Activated naive CD4-positive, alpha-beta T cell treated with anti-CD3 and anti-CD28 coated beads for 36 hours (primary cell): ENCODE measurements at regions of chr9 and their contacts with region 1.

Region 1: DNA sequence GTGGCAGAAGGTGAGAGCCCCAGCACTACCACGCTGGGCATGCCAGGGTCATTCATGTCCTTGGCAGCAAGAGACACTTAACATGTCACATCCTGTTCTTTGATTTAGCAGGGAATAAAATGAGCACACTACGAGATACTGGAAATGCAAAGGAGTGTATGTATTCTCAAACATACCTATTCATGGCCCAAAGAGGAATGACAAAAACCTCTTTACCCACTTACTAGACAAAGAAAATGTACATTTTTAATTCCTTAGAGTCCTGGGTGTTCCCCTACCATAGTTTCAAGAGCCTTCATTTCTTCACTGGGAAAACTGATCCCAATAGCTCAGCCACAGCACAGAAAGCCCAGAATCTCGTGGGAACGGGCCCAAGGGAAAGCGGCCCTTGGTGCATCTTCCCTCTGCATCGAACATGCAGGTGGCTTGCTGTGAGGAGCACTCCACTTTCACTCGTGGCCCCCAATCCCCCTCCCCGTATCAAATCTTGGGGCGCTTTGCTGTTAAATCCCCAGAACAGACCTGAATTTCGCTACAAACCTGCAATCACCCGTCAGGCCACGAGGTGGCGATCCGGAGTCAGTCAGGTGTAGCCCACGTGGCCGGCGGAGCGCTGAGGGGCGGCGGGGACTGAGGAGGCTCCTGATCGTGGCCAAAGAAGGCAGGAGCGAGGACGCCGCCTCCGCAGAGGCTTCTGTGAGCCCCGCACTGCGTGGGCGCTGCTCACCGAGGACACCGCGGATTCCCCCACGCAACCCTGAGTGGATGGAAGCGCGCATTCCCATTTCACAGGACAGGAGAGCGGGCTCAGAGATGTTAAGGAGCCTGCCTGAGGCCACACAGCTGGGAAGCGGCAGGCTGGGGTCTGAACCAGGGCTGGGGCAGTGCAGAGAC is 91.4 kb downstream of the LMX1B start:
- DNase-seq: peak; percentile 91
- H3K4me3 Mint-ChIP-seq: peak overlapping the region; percentile 58
- H3K27ac Mint-ChIP-seq: no peak overlapping the region
- H3K4me1 Mint-ChIP-seq: peaks cover 14% of the 10 kb centered on the region
- H3K27me3 Mint-ChIP-seq: peaks cover 17% of the 10 kb centered on the region

Region 2: GRCh38 chr9:126690431-126691350 is 14.4 kb before region 1 on chr9:
- CTCF ChIA-PET with region 1: interaction called, 12 read pairs
- intact Hi-C with region 1: no loop called
- DNase-seq: peak; percentile 63
- H3K4me3 Mint-ChIP-seq: no peak overlapping the region
- H3K27ac Mint-ChIP-seq: no peak overlapping the region
- H3K4me1 Mint-ChIP-seq: no peaks in the 10 kb centered on the region
- H3K27me3 Mint-ChIP-seq: peaks cover 23% of the 10 kb centered on the region

Region 3: GRCh38 chr9:126733005-126733404 is 27.9 kb after region 1 on chr9:
- CTCF ChIA-PET with region 1: interaction called, 16 read pairs
- intact Hi-C with region 1: no loop called
- DNase-seq: no peak
- H3K4me3 Mint-ChIP-seq: no peak overlapping the region
- H3K27ac Mint-ChIP-seq: no peak overlapping the region
- H3K4me1 Mint-ChIP-seq: no peaks in the 10 kb centered on the region
- H3K27me3 Mint-ChIP-seq: no peaks in the 10 kb centered on the region

Region 4: GRCh38 chr9:126752376-126752775 is 47.3 kb after region 1 on chr9:
- CTCF ChIA-PET with region 1: interaction called, 28 read pairs
- intact Hi-C with region 1: loop called (anchors 5 kb)
- DNase-seq: no peak
- H3K4me3 Mint-ChIP-seq: no peak overlapping the region
- H3K27ac Mint-ChIP-seq: no peak overlapping the region
- H3K4me1 Mint-ChIP-seq: peaks cover 16% of the 10 kb centered on the region
- H3K27me3 Mint-ChIP-seq: no peaks in the 10 kb centered on the region

Region 5: GRCh38 chr9:126773004-126773607 is 68.0 kb after region 1 on chr9:
- CTCF ChIA-PET with region 1: interaction called, 296 read pairs
- intact Hi-C with region 1: loop called (anchors 1 kb)
- DNase-seq: peak; percentile 26
- H3K4me3 Mint-ChIP-seq: no peak overlapping the region
- H3K27ac Mint-ChIP-seq: no peak overlapping the region
- H3K4me1 Mint-ChIP-seq: no peaks in the 10 kb centered on the region
- H3K27me3 Mint-ChIP-seq: peaks cover 4% of the 10 kb centered on the region

Region 6: DNA sequence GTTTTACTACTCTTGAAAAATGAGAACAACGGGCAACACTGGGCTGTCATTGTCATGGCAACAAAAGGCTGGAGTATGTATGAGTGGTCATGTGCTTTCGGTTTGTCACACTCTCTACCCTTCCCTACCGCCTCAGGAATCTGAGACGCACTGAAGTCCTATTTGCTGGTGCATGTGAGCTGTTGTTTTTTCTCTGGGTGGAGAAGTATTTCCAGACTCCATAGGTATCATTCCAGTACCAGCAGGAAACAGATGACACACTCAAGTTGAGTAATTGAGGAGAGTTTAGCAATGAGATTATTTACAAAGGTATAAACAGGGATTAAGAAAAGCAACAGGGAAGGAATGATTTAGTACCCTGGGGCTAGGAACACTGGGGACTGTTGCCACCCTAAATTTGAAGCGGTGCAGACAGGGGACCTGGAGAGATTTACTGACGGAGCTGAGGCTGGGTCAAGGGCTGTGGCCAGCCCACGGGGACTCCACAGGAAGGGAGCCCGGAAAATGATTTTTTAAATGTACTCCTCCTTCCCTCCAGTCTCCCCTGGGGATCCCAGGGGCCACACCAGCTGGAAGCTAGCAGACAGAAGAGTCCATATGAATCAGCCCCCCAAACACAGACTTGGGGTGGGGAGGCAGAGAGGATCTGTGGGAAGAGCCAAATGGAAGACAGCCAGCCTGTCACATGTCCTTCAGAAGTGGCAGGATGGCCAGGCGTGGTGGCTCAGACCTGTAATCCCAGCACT is 86.5 kb after region 1 on chr9:
- CTCF ChIA-PET with region 1: interaction called, 296 read pairs
- intact Hi-C with region 1: no loop called
- DNase-seq: no peak
- H3K4me3 Mint-ChIP-seq: no peak overlapping the region
- H3K27ac Mint-ChIP-seq: no peak overlapping the region
- H3K4me1 Mint-ChIP-seq: no peaks in the 10 kb centered on the region
- H3K27me3 Mint-ChIP-seq: peaks cover 19% of the 10 kb centered on the region

Region 7: GRCh38 chr9:126860077-126860756 is 155.1 kb after region 1 on chr9 and contains the start of gene ZBTB34:
- CTCF ChIA-PET with region 1: no interaction called
- intact Hi-C with region 1: no loop called
- DNase-seq: peak; percentile 70
- H3K4me3 Mint-ChIP-seq: peak within 1 kb of the TSS; percentile 81
- H3K27ac Mint-ChIP-seq: peak within 1 kb of the TSS; percentile 77
- H3K4me1 Mint-ChIP-seq: peaks cover 20% of the 10 kb centered on the region
- H3K27me3 Mint-ChIP-seq: no peaks in the 10 kb centered on the region
- total RNA-seq, gene ZBTB34: 4.2 to 4.6 TPM